Activated naive CD4-positive, alpha-beta T cell treated with anti-CD3 and anti-CD28 coated beads for 36 hours (primary cell): ENCODE measurements at regions of chr17 and their contacts with region 1.

Region 1: DNA sequence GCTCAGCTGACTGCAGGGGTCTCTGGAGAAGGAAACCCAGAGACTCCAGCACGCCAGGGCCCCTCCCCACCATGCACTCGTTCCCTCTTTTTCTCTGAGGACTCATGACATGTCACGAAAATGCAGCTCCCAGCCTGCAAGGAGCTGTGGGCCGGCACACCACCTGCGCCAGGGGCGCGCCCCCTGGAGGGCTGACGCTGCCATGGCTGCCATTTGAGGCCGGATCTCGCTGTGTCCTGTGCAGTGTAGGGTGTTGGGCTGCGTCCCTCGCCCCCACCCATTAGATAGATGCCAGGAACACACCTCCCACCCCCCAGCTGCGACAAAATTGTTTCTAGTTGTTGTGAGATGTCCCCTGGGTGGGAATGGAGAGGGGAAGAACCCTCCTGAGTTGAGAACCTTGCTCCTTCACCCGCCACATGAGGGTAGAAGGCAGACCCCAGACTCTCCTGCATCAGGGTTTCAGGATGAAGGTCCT is 8.2 kb downstream of the SYNGR2 start:
- DNase-seq: peak; percentile 82
- H3K4me3 Mint-ChIP-seq: no peak overlapping the region
- H3K27ac Mint-ChIP-seq: no peak overlapping the region
- H3K4me1 Mint-ChIP-seq: peaks cover 44% of the 10 kb centered on the region
- H3K27me3 Mint-ChIP-seq: no peaks in the 10 kb centered on the region

Region 2: GRCh38 chr17:78000341-78000740 is 176.2 kb before region 1 on chr17:
- CTCF ChIA-PET with region 1: no interaction called
- intact Hi-C with region 1: no loop called
- DNase-seq: no peak
- H3K4me3 Mint-ChIP-seq: no peak overlapping the region
- H3K27ac Mint-ChIP-seq: no peak overlapping the region
- H3K4me1 Mint-ChIP-seq: peaks cover 68% of the 10 kb centered on the region
- H3K27me3 Mint-ChIP-seq: no peaks in the 10 kb centered on the region

Region 3: DNA sequence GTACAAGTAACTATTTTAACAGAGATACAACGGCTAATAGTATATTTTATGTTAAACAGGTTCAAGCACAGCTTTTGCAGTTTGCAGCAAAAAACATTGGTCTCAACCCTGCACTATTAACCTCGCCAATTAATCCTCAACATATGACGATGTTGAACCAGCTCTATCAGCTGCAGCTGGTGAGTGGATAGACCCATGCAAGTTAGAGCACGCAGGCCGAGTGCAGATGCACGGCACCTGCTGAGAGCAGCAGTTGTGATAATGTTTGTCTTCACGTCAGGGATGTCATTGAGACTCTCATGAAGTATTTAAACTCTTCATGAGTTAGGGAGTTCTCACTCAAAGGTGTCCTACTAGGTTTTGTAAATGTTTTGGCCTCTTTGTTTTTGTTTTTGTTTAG is 93.6 kb before region 1 on chr17:
- CTCF ChIA-PET with region 1: interaction called, 19 read pairs
- intact Hi-C with region 1: loop called (anchors 1 kb)
- DNase-seq: no peak
- H3K4me3 Mint-ChIP-seq: no peak overlapping the region
- H3K27ac Mint-ChIP-seq: no peak overlapping the region
- H3K4me1 Mint-ChIP-seq: no peaks in the 10 kb centered on the region
- H3K27me3 Mint-ChIP-seq: no peaks in the 10 kb centered on the region

Region 4: DNA sequence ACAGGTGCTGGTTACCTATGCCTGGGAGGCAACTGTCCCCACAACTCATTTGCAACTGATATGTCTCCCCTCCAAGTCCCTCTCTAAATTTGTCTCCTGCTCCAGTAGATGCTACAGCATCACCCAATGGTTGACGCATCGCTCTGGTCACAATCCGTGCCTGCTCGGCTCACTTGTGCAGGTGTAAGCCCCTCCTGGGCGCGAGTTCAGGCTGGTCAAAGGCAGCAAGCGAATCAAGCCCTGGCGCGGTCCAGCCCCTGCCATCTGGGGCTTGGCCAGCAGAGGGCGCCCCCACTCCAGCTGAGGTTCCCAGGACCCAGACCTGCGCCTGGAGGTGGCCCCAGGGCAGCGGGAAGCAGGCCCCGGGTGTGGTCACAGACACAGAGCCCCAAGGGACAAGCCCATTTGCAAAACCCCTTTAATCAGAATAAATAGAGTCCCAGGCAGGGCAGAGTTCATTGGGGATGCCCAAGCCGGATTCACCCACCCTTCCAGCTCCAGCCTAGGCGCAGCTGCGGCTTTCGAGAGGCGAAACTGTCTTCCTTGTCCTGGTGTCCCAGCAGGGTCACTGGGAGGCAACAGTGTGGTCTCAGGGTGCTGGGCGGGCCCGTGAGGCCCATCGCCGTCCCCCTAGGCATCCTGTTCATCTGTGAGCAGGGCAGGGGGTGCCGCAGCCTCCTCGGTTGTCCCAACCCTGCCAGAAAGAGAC is 63.9 kb before region 1 on chr17:
- CTCF ChIA-PET with region 1: interaction called, 12 read pairs
- intact Hi-C with region 1: loop called (anchors 1 kb)
- DNase-seq: peak; percentile 84
- H3K4me3 Mint-ChIP-seq: no peak overlapping the region
- H3K27ac Mint-ChIP-seq: peak overlapping the region; percentile 88
- H3K4me1 Mint-ChIP-seq: peaks cover 37% of the 10 kb centered on the region
- H3K27me3 Mint-ChIP-seq: no peaks in the 10 kb centered on the region

Region 5: GRCh38 chr17:78120971-78121800 is 55.4 kb before region 1 on chr17:
- CTCF ChIA-PET with region 1: interaction called, 10 read pairs
- intact Hi-C with region 1: no loop called
- DNase-seq: peak; percentile 78
- H3K4me3 Mint-ChIP-seq: peak overlapping the region; percentile 72
- H3K27ac Mint-ChIP-seq: peak overlapping the region; percentile 80
- H3K4me1 Mint-ChIP-seq: peaks cover 57% of the 10 kb centered on the region
- H3K27me3 Mint-ChIP-seq: no peaks in the 10 kb centered on the region

Region 6: GRCh38 chr17:78133971-78134898 is 42.4 kb before region 1 on chr17:
- CTCF ChIA-PET with region 1: interaction called, 9 read pairs
- intact Hi-C with region 1: loop called (anchors 2 kb)
- DNase-seq: peak; percentile 90
- H3K4me3 Mint-ChIP-seq: peak overlapping the region; percentile 60
- H3K27ac Mint-ChIP-seq: peak overlapping the region; percentile 7
- H3K4me1 Mint-ChIP-seq: peaks cover 62% of the 10 kb centered on the region
- H3K27me3 Mint-ChIP-seq: no peaks in the 10 kb centered on the region

Region 7: DNA sequence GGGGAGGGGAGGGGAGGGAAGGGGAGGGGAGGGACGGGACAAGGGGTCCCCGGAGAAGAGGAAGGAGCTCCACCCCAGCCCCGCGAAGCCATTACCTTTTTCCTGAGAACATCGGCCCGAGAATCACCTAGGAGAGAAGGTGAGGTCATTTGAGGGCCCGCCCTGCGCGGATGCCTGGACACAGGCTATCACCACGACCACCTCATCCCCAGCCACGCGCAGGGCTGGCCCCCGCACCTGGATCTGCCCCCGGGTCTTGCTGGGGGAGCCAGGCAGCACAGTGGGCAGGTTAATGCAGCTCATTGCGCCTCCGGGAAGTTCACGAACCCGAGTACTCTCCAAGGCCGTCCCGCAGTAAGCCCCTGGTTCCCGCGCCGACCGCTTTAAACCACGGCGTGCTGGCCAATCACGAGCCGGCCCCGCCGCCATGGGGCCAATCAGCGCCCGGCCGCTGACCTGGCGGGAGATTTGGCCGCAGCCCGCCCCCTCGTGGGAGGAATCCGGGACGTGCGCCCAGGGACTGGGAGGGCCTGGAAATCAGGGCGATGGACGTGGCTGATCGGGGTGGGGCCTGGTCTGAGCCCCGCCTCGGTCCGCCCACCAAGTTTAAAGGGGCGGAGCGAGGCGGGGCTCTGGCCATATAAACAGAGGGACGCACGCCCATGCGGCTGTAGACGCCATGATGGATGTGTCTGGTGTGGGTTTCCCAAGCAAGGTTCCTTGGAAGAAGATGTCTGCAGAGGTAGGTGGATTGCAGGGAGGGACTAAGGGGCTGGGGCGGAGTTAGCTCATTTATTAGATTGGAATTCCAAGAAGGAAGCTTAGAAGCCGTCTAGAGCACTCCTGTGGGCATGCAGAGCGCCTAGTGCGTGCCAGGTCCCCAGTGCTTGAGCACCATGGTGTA is 10.4 kb after region 1 on chr17 and contains the starts of genes AFMID and TK1:
- CTCF ChIA-PET with region 1: interaction called, 11 read pairs
- intact Hi-C with region 1: loop called (anchors 1 kb)
- DNase-seq: peak; percentile 97
- H3K4me3 Mint-ChIP-seq: peak within 1 kb of the TSS; percentile 83
- H3K27ac Mint-ChIP-seq: peak within 1 kb of the TSS; percentile 70
- H3K4me1 Mint-ChIP-seq: peaks cover 28% of the 10 kb centered on the region
- H3K27me3 Mint-ChIP-seq: no peaks in the 10 kb centered on the region
- total RNA-seq, gene AFMID: 13.6 to 13.7 TPM
- total RNA-seq, gene TK1: 165 to 173 TPM

Region 8: GRCh38 chr17:78241277-78242023 is 64.9 kb after region 1 on chr17:
- CTCF ChIA-PET with region 1: no interaction called
- intact Hi-C with region 1: no loop called
- DNase-seq: no peak
- H3K4me3 Mint-ChIP-seq: no peak overlapping the region
- H3K27ac Mint-ChIP-seq: no peak overlapping the region
- H3K4me1 Mint-ChIP-seq: no peaks in the 10 kb centered on the region
- H3K27me3 Mint-ChIP-seq: no peaks in the 10 kb centered on the region

Region 9: GRCh38 chr17:78258323-78259191 is 82.0 kb after region 1 on chr17:
- CTCF ChIA-PET with region 1: no interaction called
- intact Hi-C with region 1: no loop called
- DNase-seq: peak; percentile 95
- H3K4me3 Mint-ChIP-seq: peak overlapping the region; percentile 81
- H3K27ac Mint-ChIP-seq: peak overlapping the region; percentile 88
- H3K4me1 Mint-ChIP-seq: peaks cover 59% of the 10 kb centered on the region
- H3K27me3 Mint-ChIP-seq: no peaks in the 10 kb centered on the region